ENCODE measurements at regions of chr7 and their contacts with region 1.

Region 1: GRCh38 chr7:130896898-130897514 is 163.0 kb upstream of the KLF14 start:
- DNase-seq: peak; percentile 88
- ATAC-seq: peak; percentile 73

Region 2: DNA sequence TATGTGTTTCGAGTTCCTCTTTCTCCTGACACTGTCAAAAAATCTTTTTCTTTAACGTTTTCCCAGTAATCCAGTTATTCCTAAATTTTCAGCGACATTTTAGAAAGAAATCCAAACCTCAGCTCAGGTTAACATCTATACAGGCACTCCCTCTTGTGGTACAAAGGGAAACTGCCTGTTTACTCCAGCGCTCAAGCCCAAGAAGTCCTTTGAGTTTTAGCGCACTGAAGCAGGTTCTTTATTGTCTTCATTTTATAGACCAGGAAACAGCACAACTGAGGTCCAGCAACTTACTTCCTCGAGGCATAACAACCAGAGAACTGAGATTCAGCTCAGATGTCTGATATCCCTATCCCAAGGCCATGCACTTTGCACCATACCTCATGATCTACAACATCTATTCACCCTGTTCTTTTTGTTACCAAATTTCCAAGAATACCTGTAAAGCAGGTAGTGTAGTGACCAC is 143.5 kb after region 1 on chr7:
- intact Hi-C with region 1: loop called (anchors 10 kb)
- DNase-seq: no peak
- ATAC-seq: peak; percentile 83

Region 3: GRCh38 chr7:131424219-131424822 is 527.3 kb after region 1 on chr7:
- intact Hi-C with region 1: loop called (anchors 10 kb)
- DNase-seq: no peak
- ATAC-seq: peak; percentile 47

Region 4: GRCh38 chr7:131674131-131674530 is 777.1 kb after region 1 on chr7:
- intact Hi-C with region 1: no loop called
- DNase-seq: no peak
- ATAC-seq: no peak